ENCODE measurements at regions of chr5 and their contacts with region 1.

Region 1: GRCh38 chr5:165209086-165209727 is 1703.8 kb downstream of the MAT2B start:
- DNase-seq: no peak

Region 2: DNA sequence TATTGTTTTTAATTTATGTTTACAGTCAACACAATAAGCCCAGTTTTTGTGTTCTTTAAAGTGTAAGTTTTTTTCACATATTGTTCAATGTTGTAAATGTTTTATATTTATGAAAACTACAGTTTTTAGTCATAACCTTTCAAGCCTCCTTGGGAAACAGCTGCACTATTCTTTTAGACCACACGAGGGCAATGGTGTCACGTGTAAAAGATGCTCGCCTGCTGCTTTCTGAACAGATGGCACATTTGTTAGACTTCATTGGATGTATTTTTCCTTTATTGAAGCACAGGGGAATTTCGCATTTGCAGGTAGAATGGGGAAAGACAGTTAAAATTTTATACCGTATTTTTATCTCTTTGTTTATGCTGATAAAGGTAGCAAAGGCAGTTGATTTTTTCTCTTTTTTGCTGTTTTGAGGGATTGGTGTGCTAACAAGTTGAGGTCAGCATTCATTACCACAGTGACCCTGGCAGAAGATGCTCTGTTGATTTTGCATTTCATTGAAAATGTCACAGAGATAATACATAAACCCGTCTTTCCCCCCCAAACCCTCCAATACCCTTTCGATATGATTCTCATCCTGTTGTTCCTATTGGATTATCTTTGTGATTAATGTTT is 1644.8 kb before region 1 on chr5:
- intact Hi-C with region 1: loop called (anchors 5 kb)
- DNase-seq: peak in 7 of 10 donors; percentile 35 to 88 (median 68)

Region 3: GRCh38 chr5:163695830-163696578 is 1513.2 kb before region 1 on chr5:
- intact Hi-C with region 1: loop called (anchors 2 kb)
- DNase-seq: peak; percentile 19 to 88 (median 37)

Region 4: GRCh38 chr5:164013077-164013670 is 1196.0 kb before region 1 on chr5:
- intact Hi-C with region 1: loop called (anchors 2 kb)
- DNase-seq: peak in 5 of 10 donors; percentile 8 to 53 (median 34)

Region 5: DNA sequence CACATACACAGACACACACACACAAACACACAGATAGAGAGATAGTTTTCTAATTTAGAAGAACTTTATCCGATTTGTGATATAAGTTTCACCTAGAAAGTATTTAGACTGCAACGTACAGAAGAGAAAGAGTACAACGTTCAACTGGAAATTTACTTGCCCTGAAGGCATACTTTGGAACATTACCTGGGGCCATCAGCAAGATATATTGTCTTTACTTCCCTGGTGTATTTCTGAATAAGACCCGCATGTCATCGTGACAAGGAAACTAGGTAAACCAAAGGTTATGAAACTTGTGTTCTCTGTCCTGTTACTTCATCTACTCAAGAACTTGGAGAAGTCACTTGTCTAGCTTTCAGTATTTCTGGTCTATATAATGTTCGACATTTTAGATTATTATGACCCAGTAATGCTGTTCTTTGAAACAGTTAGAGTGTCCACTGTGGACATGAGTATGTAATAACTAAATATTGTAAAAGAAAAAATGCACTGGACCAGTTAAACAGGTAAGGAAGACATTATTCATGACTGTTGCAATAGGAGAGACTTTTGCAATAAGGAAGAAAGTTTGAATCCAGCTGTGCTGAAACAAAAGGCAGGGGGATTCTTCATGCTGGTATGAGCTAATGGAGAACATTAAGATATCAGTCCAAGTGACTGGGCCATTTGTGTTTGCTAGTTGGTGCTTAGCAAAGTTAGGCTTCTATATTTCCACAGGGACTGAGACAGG is 87.4 kb after region 1 on chr5:
- intact Hi-C with region 1: no loop called
- DNase-seq: no peak

Measured in posterior cingulate gyrus (tissue), 11 donors.